ENCODE measurements at regions of chr4 and their contacts with region 1.

Region 1: DNA sequence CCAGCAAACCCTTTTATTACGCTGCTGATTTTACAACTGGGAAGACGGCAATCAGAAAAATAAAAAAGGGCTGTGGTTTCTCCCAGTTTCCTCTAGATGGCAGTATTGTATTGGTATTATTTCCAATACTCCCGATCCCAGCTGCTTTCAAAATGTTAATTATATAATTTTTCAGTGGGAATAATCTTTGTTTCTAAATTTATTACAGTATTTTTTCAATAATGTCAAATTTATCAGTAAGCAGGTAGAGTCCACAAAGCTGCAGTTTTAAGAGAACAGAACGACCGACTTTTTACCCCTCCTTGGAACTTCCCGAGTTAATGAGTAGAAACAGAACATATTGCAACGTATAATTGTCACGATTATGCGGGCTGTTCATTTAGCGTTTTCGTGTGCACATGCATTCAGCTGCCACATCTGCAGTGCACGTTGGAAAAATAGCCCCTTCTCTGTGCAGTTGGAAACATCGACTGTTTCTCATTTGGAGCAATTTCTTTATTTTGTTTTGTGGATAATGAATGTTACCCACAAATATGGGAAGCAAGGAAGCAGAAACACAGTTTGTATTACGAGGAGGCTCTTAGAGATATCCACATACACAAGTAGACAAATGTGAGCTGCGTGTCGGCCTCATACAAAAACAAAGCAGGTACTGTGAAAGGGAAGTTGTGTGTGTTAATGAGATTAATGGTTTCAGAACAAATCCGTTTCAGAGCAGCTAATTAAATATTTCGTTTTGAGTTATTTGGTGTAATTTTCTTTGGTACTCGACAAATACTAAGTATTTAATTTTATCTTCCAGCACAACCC is 188.0 kb downstream of the STIM2 start:
- DNase-seq: no peak
- ATAC-seq: peak in 1 of 8 donors; percentile 18
- H3K4me3 ChIP-seq: peak overlapping the region in 7 of 10 donors; percentile 4 to 39 (median 36)
- H3K27ac ChIP-seq: no peak overlapping the region
- H3K4me1 ChIP-seq: peaks cover 0 to 7% (median 0%) of the 10 kb centered on the region in 9 donors
- H3K27me3 ChIP-seq: peaks cover 0 to 58% (median 19%) of the 10 kb centered on the region in 7 donors
- CTCF ChIP-seq: peak; percentile 59 to 83 (median 78)

Region 2: DNA sequence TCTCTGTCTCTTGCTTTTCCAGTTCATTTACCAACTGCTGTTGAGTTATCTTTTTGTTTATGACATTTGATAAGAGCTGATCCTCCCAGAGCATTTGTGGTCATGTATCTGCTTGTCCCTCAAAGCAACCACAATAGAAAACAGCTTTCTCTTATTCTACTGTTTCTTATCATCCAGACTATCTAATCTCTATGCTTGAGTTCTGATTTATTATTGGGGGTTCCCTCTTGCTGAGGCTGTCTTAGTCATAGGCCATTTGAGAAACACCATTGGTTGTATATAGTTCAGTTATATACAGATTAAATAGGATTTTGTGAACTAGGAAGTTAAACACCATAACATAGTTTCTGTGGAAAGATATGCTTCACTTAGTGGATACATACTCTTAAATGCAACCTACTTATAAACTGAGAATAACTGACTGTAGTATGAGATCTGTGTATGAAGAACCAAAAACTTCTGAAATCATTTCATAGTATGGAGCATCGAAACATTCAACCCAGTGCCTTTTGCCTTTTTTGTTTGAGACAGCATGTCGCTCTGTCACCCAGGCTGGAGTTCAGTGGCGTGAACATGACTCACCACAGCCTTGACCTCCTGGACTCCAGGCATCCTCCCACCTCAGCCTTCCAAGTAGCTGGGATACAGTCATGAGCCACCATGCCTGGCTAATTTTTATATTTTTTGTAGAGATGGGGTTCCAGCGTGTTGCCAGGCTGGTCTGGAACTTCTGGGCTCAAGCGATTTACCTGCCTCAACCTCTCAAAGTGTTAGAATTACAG is 112.2 kb before region 1 on chr4:
- intact Hi-C with region 1: no loop called
- DNase-seq: no peak
- ATAC-seq: no peak
- H3K4me3 ChIP-seq: no peak overlapping the region
- H3K27ac ChIP-seq: no peak overlapping the region
- H3K4me1 ChIP-seq: peaks cover 0 to 21% (median 12%) of the 10 kb centered on the region in 9 donors
- H3K27me3 ChIP-seq: no peaks in the 10 kb centered on the region
- CTCF ChIP-seq: no peak

Region 3: GRCh38 chr4:27084685-27085361 is 36.2 kb after region 1 on chr4:
- intact Hi-C with region 1: no loop called
- DNase-seq: no peak
- ATAC-seq: peak in 1 of 8 donors; percentile 41
- H3K4me3 ChIP-seq: peak overlapping the region in 9 of 10 donors; percentile 0 to 46 (median 36)
- H3K27ac ChIP-seq: no peak overlapping the region
- H3K4me1 ChIP-seq: peaks cover 0 to 24% (median 9%) of the 10 kb centered on the region in 9 donors
- H3K27me3 ChIP-seq: peaks cover 0 to 69% (median 62%) of the 10 kb centered on the region in 7 donors
- CTCF ChIP-seq: peak in 2 of 9 donors; percentile 26 to 30

Region 4: DNA sequence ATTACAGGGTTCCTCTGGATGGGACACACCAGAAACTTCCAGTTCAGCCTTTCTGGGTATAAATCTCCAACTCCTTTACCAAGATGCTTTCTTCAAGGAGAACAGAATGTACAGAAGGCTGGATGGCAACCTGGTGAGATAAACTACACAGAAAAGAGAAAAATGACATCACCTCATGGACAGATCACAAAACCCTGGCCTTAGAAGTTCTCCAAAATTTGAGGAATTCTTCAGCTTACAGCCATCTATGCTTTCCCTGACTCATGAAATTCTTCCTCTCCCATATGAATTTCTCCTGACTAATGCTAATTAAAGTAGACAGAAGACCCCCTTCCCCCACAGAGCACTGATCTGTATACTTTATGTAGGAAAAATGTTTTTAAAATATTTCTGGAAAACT is 157.4 kb after region 1 on chr4:
- intact Hi-C with region 1: no loop called
- DNase-seq: no peak
- ATAC-seq: no peak
- H3K4me3 ChIP-seq: no peak overlapping the region
- H3K27ac ChIP-seq: no peak overlapping the region
- H3K4me1 ChIP-seq: peaks cover 0 to 1% (median 0%) of the 10 kb centered on the region in 9 donors
- H3K27me3 ChIP-seq: peaks cover 0 to 3% (median 0%) of the 10 kb centered on the region in 7 donors
- CTCF ChIP-seq: no peak

Region 5: GRCh38 chr4:27318743-27319142 is 270.1 kb after region 1 on chr4:
- intact Hi-C with region 1: loop called in 2 of 10 experiments (anchors 5 to 10 kb)
- DNase-seq: peak in 1 of 2 donors; percentile 6
- ATAC-seq: peak in 1 of 8 donors; percentile 30
- H3K4me3 ChIP-seq: no peak overlapping the region
- H3K27ac ChIP-seq: no peak overlapping the region
- H3K4me1 ChIP-seq: no peaks in the 10 kb centered on the region
- H3K27me3 ChIP-seq: peaks cover 0 to 8% (median 0%) of the 10 kb centered on the region in 7 donors
- CTCF ChIP-seq: peak in 7 of 9 donors; percentile 13 to 49 (median 40)

Region 6: DNA sequence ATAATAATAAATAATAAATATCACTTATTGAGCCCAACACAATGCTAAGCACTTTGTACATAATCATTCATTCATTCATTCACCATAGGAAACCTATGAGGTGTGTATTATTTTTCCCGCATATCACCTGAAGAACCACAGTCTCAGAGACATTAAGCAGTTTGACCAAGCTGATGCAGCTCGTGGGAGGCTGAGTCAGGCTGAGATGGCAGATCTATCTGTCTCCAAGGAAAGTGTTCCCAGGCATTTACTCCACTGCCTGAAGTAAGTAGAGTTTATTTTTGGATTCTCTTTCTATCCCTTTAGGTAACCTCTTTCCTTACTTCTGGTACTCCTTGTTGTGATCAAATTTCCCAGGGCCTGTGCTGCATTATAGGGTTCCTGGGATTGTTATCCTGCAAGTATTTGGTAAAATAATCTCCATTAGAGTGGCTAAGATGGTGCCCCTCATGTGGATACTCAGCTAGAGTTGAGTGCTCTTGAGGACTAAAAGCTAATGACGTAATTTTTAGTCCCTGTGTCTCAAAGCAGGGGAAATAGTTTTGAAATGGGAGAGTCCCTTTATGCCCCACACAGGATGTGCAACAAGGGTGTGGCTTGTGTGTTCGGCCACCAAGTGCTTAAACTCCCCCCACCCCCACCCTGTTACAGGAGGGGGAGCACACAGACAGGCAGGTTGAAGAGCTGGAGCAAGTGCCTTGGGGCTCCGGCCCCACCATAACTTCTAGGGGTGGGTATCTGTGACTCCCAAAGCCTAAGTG is 279.0 kb after region 1 on chr4:
- intact Hi-C with region 1: loop called in 1 of 10 experiments (anchors 10 kb)
- DNase-seq: no peak
- ATAC-seq: no peak
- H3K4me3 ChIP-seq: no peak overlapping the region
- H3K27ac ChIP-seq: no peak overlapping the region
- H3K4me1 ChIP-seq: no peaks in the 10 kb centered on the region
- H3K27me3 ChIP-seq: no peaks in the 10 kb centered on the region
- CTCF ChIP-seq: no peak

Region 7: GRCh38 chr4:27616166-27616565 is 567.5 kb after region 1 on chr4:
- intact Hi-C with region 1: no loop called
- DNase-seq: no peak
- ATAC-seq: no peak
- H3K4me3 ChIP-seq: no peak overlapping the region
- H3K27ac ChIP-seq: no peak overlapping the region
- H3K4me1 ChIP-seq: no peaks in the 10 kb centered on the region
- H3K27me3 ChIP-seq: no peaks in the 10 kb centered on the region
- CTCF ChIP-seq: no peak

Measured in heart right ventricle (tissue), 16 donors.